HepG2 (cell line): ENCODE measurements at regions of chr3 and their contacts with region 1.

Region 1: DNA sequence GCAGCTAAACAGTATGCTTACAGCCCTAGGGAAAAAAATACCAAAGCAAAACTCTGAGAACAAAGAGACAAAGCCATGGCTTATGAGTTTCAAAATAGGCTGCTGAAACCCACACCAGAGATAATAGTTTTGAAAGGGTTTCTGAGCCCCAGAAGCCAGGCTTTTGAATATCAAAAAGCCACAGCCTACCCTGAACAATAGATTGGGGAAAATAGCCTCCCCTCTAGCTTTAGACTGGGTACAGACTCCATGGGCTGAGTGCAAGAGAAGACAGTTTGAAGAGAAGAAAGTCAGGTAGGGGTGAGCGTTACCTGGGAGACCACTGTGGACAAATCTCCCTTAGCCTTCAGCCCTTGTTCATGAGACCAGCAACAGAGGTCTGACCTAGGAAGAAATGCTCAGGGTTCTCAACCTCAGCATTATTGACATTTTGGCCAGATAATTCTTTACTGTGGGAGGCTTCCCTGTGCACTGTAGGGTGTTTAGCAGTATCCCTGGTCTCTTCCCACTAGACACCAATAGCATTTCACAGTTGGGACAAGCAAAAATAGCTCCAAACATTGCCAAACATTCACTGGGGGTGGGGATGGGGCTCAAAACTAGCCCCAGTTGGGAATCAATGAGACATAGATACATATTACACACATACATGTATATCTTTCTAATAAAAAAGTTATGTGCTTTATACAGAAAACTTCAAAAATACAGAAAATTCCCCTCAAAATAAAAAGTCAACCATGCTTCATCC is 11.6 kb upstream of the TAFA4 start:
- DNase-seq: peak; percentile 24
- ATAC-seq: peak; percentile 19; the same call in 1 of the 3 replicates
- H3K4me3 ChIP-seq: no peak overlapping the region
- H3K27ac ChIP-seq: peak overlapping the region; percentile 36
- H3K4me1 ChIP-seq: peaks cover 45% of the 10 kb centered on the region
- H3K27me3 ChIP-seq: peaks cover 0 to 9% of the 10 kb centered on the region in 2 experiments; a peak in 4 of 5 replicates
- CTCF ChIP-seq: no peak
- EP300 ChIP-seq: no peak
- POLR2A ChIP-seq: no peak
- RAD21 ChIP-seq: no peak

Region 2: DNA sequence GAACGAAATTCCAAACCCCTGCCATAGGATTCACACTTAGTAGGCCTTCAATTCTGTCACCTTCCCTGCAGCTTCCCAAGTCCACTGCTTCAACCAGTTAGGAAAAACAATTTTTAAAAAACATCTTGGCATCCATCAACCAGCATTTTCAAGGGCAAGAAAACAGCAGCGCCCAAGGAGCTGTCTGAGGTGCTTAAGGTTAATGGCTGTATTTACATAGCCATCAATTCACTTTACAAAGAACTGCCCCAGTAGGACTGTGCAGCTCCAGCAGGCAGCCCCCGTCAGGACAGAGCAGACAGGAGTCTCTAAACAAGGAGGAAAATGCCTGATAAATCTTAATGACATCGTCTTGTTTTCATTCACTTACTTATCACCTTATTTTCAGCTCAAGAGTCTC is 24.9 kb before region 1 on chr3:
- CTCF ChIA-PET with region 1: no interaction called
- POLR2A ChIA-PET with region 1: no interaction called
- in situ Hi-C with region 1: no loop called
- intact Hi-C with region 1: no loop called
- DNase-seq: no peak
- ATAC-seq: no peak
- H3K4me3 ChIP-seq: no peak overlapping the region
- H3K27ac ChIP-seq: no peak overlapping the region
- H3K4me1 ChIP-seq: peaks cover 14% of the 10 kb centered on the region
- H3K27me3 ChIP-seq: 0 out of 5 replicates have a peak, but pooled peaks cover 0 to 6% of the 10 kb centered on the region in 2 experiments
- CTCF ChIP-seq: no peak
- EP300 ChIP-seq: no peak
- POLR2A ChIP-seq: no peak
- RAD21 ChIP-seq: no peak

Region 3: GRCh38 chr3:68931406-68932149 is 12.3 kb before region 1 on chr3:
- CTCF ChIA-PET with region 1: no interaction called
- POLR2A ChIA-PET with region 1: interaction called, 4 read pairs
- in situ Hi-C with region 1: no loop called
- intact Hi-C with region 1: loop called (anchors 1 kb)
- DNase-seq: no peak
- ATAC-seq: no peak
- H3K4me3 ChIP-seq: peak overlapping the region in 1 of 3 experiments; percentile 50; a peak in 1 of 6 replicates
- H3K27ac ChIP-seq: no peak overlapping the region
- H3K4me1 ChIP-seq: peaks cover 12% of the 10 kb centered on the region
- H3K27me3 ChIP-seq: peaks cover 1 to 21% of the 10 kb centered on the region in 2 experiments
- CTCF ChIP-seq: no peak
- EP300 ChIP-seq: no peak
- POLR2A ChIP-seq: no peak
- RAD21 ChIP-seq: no peak